Caco-2 (cell line): ENCODE measurements at regions of chr2 and their contacts with region 1.

Region 1: GRCh38 chr2:67037655-67038054 is 359.5 kb upstream of the ETAA1 start:
- DNase-seq: peak; percentile 40 to 58
- H3K4me3 ChIP-seq: no peak overlapping the region
- H3K4me3 Mint-ChIP-seq: no peak overlapping the region
- H3K27ac Mint-ChIP-seq: no peak overlapping the region
- H3K4me1 ChIP-seq: peaks cover 42% of the 10 kb centered on the region
- H3K4me1 Mint-ChIP-seq: peaks cover 27% of the 10 kb centered on the region
- H3K27me3 ChIP-seq: no peaks in the 10 kb centered on the region
- H3K27me3 Mint-ChIP-seq: no peaks in the 10 kb centered on the region
- CTCF ChIP-seq: no peak

Region 2: GRCh38 chr2:67015681-67016080 is 22.0 kb before region 1 on chr2:
- CTCF ChIA-PET with region 1: no interaction called
- POLR2A ChIA-PET with region 1: no interaction called
- intact Hi-C with region 1: no loop called
- DNase-seq: no peak
- H3K4me3 ChIP-seq: no peak overlapping the region
- H3K4me3 Mint-ChIP-seq: no peak overlapping the region
- H3K27ac Mint-ChIP-seq: no peak overlapping the region
- H3K4me1 ChIP-seq: no peaks in the 10 kb centered on the region
- H3K4me1 Mint-ChIP-seq: no peaks in the 10 kb centered on the region
- H3K27me3 ChIP-seq: no peaks in the 10 kb centered on the region
- H3K27me3 Mint-ChIP-seq: no peaks in the 10 kb centered on the region
- CTCF ChIP-seq: no peak

Region 3: DNA sequence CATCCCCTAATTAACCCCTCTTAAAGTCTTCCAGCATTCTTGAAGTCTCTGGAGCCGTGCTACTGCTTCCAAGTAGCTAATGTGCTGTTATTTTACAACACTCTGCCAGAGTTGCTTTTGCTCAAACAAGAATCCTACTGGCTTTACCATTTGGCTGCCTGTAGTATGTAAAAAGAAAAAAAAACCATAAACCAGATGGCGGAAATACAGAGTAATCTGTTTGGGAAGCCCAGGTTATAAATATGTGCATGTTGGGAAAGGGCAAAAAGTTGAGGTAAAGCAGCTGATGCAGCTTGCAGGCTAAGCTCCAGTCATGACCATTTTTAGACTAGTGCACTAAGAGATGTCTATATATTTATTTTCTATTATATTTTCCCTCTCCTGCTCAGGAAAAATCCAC is 46.3 kb after region 1 on chr2:
- CTCF ChIA-PET with region 1: no interaction called
- POLR2A ChIA-PET with region 1: interaction called, 3 read pairs
- intact Hi-C with region 1: loop called (anchors 1 kb)
- DNase-seq: no peak
- H3K4me3 ChIP-seq: no peak overlapping the region
- H3K4me3 Mint-ChIP-seq: no peak overlapping the region
- H3K27ac Mint-ChIP-seq: peak overlapping the region; percentile 66
- H3K4me1 ChIP-seq: peaks cover 19% of the 10 kb centered on the region
- H3K4me1 Mint-ChIP-seq: peaks cover 18% of the 10 kb centered on the region
- H3K27me3 ChIP-seq: no peaks in the 10 kb centered on the region
- H3K27me3 Mint-ChIP-seq: no peaks in the 10 kb centered on the region
- CTCF ChIP-seq: no peak